Dendritic cell treated with granulocyte-macrophage colony-stimulating factor and Interleukin-4, amounts not matched to agents 40 ng/mL and 50 ng/mL, for 4 days (primary cell): ENCODE measurements at regions of chrX and their contacts with region 1.

Region 1: GRCh38 chrX:103248553-103248952 is 6.4 kb downstream of the TCEAL8 start:
- H3K4me3 Mint-ChIP-seq: no peak overlapping the region
- H3K27ac Mint-ChIP-seq: no peak overlapping the region
- H3K4me1 Mint-ChIP-seq: peaks cover 3% of the 10 kb centered on the region
- H3K27me3 Mint-ChIP-seq: no peaks in the 10 kb centered on the region

Region 2: GRCh38 chrX:103211012-103211715 is 37.4 kb before region 1 on chrX:
- intact Hi-C with region 1: loop called (anchors 1 kb)
- H3K4me3 Mint-ChIP-seq: no peak overlapping the region
- H3K27ac Mint-ChIP-seq: no peak overlapping the region
- H3K4me1 Mint-ChIP-seq: peaks cover 12% of the 10 kb centered on the region
- H3K27me3 Mint-ChIP-seq: no peaks in the 10 kb centered on the region